Gastrocnemius medialis (tissue), 4 donors: ENCODE measurements at regions of chr9 and their contacts with region 1.

Region 1: DNA sequence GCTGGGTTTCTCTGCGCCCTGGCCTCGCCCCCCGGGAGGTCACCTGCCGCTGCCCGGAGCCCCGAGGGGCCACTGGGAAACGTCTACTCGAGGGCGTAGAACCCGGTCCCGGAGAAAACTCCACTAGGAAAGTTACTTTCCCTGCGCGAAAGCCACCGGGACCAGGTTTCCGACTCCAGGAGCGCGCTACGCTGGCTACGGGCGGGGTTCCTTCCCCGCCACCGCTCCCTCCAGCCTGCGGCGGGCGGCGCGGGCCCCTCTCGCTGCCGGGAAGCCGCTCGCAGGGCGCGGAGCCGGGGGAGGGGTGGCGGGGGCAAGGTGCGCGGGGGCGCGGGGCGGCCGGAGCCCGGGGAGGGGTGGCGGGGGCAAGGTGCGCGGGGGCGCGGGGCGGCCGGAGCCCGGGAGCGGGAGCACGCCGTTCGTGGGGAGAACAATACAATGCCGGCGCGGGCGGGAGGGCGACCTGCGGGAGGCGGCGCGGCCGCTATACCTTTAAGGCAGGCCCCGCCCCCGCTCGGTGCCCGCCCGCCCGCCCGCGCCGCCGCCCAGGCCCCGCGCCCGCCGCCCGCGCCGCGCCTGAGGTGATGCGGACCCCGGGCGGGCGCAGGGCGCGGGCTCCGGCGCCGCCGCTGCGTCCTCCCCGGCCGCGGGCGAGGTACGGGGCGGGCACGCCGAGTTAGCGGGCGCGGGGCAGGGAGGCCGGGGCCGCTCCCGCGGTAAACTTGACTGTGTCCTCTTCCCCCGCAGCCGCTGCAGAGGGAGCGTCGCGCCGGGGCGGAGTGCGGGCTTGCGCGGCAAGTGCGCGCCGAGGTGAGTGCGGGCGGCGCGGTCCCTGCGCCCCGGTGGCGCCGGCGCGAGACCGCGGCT is 278.1 kb downstream of the AOPEP start:
- DNase-seq: peak; percentile 28 to 59
- ATAC-seq: peak; percentile 51 to 57
- H3K4me3 ChIP-seq: peak overlapping the region; percentile 66 to 84 (median 82)
- H3K27ac ChIP-seq: peak overlapping the region; percentile 95 to 98 (median 97)
- H3K4me1 ChIP-seq: peaks cover 25 to 40% of the 10 kb centered on the region in 2 donors
- H3K27me3 ChIP-seq: no peaks in the 10 kb centered on the region
- CTCF ChIP-seq: peak in 2 of 5 experiments; percentile 17 to 22
- POLR2A ChIP-seq: peak; percentile 57 to 80

Region 2: DNA sequence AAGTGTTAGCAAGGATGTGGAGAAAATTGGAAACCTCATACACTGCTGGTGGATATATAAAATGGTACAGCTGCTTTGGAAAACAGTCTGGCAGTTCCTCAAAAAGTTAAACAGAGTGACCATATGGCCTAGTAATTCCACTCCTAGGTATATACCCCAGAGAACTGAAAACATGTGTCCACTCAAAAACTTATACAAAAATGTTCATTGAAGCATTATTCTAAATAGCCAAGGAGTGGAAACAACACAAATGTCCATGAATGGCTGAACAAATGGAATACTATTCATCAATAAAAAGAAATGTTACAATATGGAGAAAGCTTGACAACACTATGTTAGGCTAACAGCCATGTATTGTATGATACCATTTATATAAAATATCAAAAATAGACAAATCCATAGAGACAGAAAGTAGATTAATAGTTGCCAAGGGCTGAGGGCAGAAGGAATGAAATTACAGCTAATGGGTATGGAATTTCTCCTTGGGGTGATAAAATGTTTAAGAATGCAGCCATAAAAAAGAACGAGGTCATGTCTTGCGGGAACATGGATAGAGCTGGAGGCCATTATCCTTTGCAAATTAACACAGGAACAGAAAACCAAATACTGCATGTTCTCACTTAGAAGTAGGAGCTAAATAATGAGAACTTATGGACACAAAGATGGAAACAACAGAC is 331.7 kb before region 1 on chr9:
- in situ Hi-C with region 1: no loop called
- intact Hi-C with region 1: no loop called
- DNase-seq: no peak
- ATAC-seq: no peak
- H3K4me3 ChIP-seq: no peak overlapping the region
- H3K27ac ChIP-seq: no peak overlapping the region
- H3K4me1 ChIP-seq: peaks cover 8 to 13% of the 10 kb centered on the region in 2 donors
- H3K27me3 ChIP-seq: no peaks in the 10 kb centered on the region
- CTCF ChIP-seq: no peak
- POLR2A ChIP-seq: no peak

Region 3: GRCh38 chr9:94805585-94805984 is 199.1 kb before region 1 on chr9:
- in situ Hi-C with region 1: no loop called
- intact Hi-C with region 1: loop called (anchors 5 kb)
- DNase-seq: no peak
- ATAC-seq: peak; percentile 12 to 41
- H3K4me3 ChIP-seq: no peak overlapping the region
- H3K27ac ChIP-seq: peak overlapping the region; percentile 2 to 39 (median 32)
- H3K4me1 ChIP-seq: peaks cover 66 to 72% of the 10 kb centered on the region in 2 donors
- H3K27me3 ChIP-seq: no peaks in the 10 kb centered on the region
- CTCF ChIP-seq: no peak
- POLR2A ChIP-seq: no peak

Region 4: DNA sequence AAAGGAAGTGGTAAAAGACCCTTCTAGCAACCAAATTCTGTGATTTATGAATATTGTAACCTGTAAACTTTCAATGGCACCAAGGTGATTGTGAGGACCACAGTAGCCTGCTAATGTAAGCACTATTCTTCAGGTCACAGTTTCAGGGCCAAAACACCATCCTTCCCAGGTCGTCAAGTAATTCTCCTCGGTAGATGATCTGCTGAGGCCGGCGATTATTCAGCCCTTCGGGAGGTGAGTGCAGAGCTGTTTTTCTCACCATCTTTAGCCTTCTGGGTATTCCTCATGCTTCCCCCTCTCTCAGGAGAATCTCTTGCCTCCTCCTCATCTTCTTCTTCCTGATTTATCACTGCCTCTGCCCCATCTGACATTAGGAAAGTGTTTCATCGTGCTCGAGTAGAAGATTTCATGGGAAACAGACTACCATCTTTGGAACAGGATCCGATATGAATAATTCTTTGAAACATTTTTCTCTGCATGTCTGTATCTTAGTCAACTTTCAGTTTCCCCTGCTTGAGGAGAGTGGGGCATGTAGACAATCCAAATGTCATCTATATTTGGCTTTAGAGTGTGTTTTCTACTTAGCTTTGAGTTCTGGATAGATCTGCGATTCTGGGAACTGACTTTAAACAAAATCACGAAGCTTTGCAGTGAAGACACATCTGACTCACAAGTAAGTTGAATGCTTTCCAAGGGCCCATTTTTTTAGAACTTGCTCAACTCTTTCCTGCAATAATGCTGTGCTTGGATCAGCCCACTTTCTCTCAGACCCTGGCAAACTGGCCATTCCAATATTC is 104.2 kb before region 1 on chr9:
- in situ Hi-C with region 1: no loop called
- intact Hi-C with region 1: no loop called
- DNase-seq: no peak
- ATAC-seq: peak; percentile 68 to 81
- H3K4me3 ChIP-seq: peak overlapping the region in 1 of 4 donors; percentile 20
- H3K27ac ChIP-seq: peak overlapping the region; percentile 48 to 73 (median 52)
- H3K4me1 ChIP-seq: peaks cover 11 to 18% of the 10 kb centered on the region in 2 donors
- H3K27me3 ChIP-seq: no peaks in the 10 kb centered on the region
- CTCF ChIP-seq: no peak
- POLR2A ChIP-seq: no peak

Region 5: DNA sequence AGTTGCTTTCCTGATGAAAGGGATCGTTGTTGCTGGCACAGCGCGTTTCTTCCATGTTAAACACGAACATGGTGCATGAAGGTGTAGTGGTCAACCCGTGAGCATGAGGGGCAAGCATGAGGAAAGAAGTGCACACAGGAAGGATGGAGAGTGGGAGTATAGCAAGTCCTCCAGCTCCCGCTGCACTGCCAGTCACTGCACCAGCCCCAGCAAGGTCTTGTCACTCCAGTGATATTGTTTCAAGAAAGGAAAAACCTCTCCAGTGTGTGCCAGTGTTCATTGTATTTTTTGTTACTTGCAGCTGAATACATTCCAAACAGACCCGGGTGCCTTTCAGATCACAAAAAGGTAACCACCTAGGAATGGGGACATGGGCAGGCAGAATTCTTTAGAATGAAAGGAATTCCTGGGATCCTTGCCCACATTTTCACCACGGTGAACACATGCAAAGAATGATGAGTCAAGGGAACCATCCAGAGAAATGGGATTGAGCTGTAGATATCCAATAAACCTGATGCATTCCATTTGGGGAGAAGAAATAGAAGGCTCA is 91.9 kb before region 1 on chr9:
- in situ Hi-C with region 1: no loop called
- intact Hi-C with region 1: loop called (anchors 5 kb)
- DNase-seq: no peak
- ATAC-seq: no peak
- H3K4me3 ChIP-seq: no peak overlapping the region
- H3K27ac ChIP-seq: peak overlapping the region in 1 of 4 donors; percentile 28
- H3K4me1 ChIP-seq: peaks cover 20 to 31% of the 10 kb centered on the region in 2 donors
- H3K27me3 ChIP-seq: no peaks in the 10 kb centered on the region
- CTCF ChIP-seq: no peak
- POLR2A ChIP-seq: no peak

Region 6: GRCh38 chr9:95025213-95026147 is 20.8 kb after region 1 on chr9:
- in situ Hi-C with region 1: no loop called
- intact Hi-C with region 1: loop called (anchors 1 kb)
- DNase-seq: peak; percentile 80 to 88
- ATAC-seq: peak; percentile 76 to 78
- H3K4me3 ChIP-seq: peak overlapping the region in 1 of 4 donors; percentile 16
- H3K27ac ChIP-seq: peak overlapping the region; percentile 95 to 98 (median 97)
- H3K4me1 ChIP-seq: peaks cover 95 to 97% of the 10 kb centered on the region in 2 donors
- H3K27me3 ChIP-seq: no peaks in the 10 kb centered on the region
- CTCF ChIP-seq: peak in 4 of 5 experiments; percentile 16 to 49 (median 33)
- POLR2A ChIP-seq: peak in 1 of 2 donors; percentile 38

Region 7: GRCh38 chr9:95065224-95065623 is 60.6 kb after region 1 on chr9:
- in situ Hi-C with region 1: no loop called
- intact Hi-C with region 1: loop called (anchors 5 kb)
- DNase-seq: peak in 1 of 2 donors; percentile 54
- ATAC-seq: peak; percentile 59 to 65
- H3K4me3 ChIP-seq: no peak overlapping the region
- H3K27ac ChIP-seq: peak overlapping the region; percentile 85 to 96 (median 91)
- H3K4me1 ChIP-seq: peaks cover 100% of the 10 kb centered on the region in 2 donors
- H3K27me3 ChIP-seq: no peaks in the 10 kb centered on the region
- CTCF ChIP-seq: no peak
- POLR2A ChIP-seq: no peak

Region 8: GRCh38 chr9:95078958-95079357 is 74.3 kb after region 1 on chr9:
- in situ Hi-C with region 1: no loop called
- intact Hi-C with region 1: no loop called
- DNase-seq: peak in 1 of 2 donors; percentile 21
- ATAC-seq: no peak
- H3K4me3 ChIP-seq: no peak overlapping the region
- H3K27ac ChIP-seq: peak overlapping the region; percentile 85 to 96 (median 91)
- H3K4me1 ChIP-seq: peaks cover 84 to 87% of the 10 kb centered on the region in 2 donors
- H3K27me3 ChIP-seq: no peaks in the 10 kb centered on the region
- CTCF ChIP-seq: no peak
- POLR2A ChIP-seq: no peak

Region 9: DNA sequence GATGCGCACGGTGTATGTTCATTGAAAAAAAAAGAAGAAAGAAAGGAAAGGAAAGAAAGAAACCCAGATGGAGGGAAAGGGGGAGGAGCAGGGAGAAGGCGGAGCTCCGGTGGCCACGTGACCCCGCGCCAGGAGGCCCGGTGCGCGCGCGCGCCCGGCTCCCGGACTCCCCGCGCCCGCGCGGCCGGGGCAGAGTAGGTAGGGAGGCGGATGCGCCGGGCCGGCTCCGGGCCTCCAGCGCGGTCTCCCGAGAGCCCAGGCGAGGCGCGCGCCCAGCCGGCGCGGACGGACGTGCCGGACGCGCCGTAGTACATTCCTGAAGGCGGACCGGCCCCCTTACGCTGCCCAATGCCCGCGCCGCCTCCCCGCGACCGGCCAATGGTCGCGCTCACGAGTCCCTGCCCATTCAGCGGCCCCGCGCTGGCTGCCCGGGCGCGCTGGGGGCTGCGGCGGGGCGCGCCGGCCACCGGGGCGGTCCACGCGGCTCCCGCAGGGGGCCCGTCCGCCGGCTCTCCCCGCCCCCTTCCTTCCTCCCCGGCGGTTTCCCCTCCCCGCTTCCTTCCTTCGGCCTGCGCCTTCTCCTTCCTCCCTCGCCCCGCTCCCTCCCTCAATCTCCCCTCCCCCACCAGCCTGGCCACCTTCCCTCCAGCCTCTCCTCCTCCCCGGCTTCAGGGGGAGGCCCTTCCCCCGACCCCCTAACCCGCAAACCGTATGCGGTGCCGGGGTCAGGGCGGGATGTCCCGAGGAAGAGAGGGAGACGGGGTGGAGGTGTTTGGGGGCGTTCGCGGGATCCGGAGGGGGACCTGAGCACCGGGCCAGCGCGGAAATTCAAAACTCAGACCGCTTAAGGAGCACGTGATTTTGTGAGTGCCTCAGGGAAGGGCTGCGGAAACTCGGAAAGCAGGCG is 506.3 kb after region 1 on chr9:
- in situ Hi-C with region 1: no loop called
- intact Hi-C with region 1: loop called (anchors 10 kb)
- DNase-seq: peak; percentile 79 to 88
- ATAC-seq: peak; percentile 64 to 71
- H3K4me3 ChIP-seq: peak overlapping the region; percentile 63 to 95 (median 78)
- H3K27ac ChIP-seq: peak overlapping the region; percentile 84 to 96 (median 91)
- H3K4me1 ChIP-seq: peaks cover 6 to 13% of the 10 kb centered on the region in 2 donors
- H3K27me3 ChIP-seq: peaks cover 0 to 18% (median 15%) of the 10 kb centered on the region in 3 donors
- CTCF ChIP-seq: peak in 1 of 5 experiments; percentile 10
- POLR2A ChIP-seq: peak; percentile 83 to 92